Heart right ventricle (tissue), 16 donors: ENCODE measurements at regions of chr12 and their contacts with region 1.

Region 1: GRCh38 chr12:56117778-56118687 is at the start of gene ZC3H10:
- DNase-seq: peak; percentile 93 to 97
- ATAC-seq: peak; percentile 81 to 91 (median 88)
- H3K4me3 ChIP-seq: peak within 1 kb of the TSS; percentile 53 to 84 (median 74)
- H3K27ac ChIP-seq: peak within 1 kb of the TSS; percentile 82 to 95 (median 91)
- H3K4me1 ChIP-seq: peaks cover 0 to 56% (median 38%) of the 10 kb centered on the region in 9 donors
- H3K27me3 ChIP-seq: no peaks in the 10 kb centered on the region
- CTCF ChIP-seq: peak in 8 of 9 donors; percentile 43 to 78 (median 52)
- total RNA-seq, gene ZC3H10: 3.6 to 5.8 (median 4.9) TPM

Region 2: GRCh38 chr12:55780685-55781084 is 337.3 kb before region 1 on chr12:
- intact Hi-C with region 1: no loop called
- DNase-seq: no peak
- ATAC-seq: no peak
- H3K4me3 ChIP-seq: no peak overlapping the region
- H3K27ac ChIP-seq: no peak overlapping the region
- H3K4me1 ChIP-seq: no peaks in the 10 kb centered on the region
- H3K27me3 ChIP-seq: no peaks in the 10 kb centered on the region
- CTCF ChIP-seq: no peak

Region 3: GRCh38 chr12:55996715-55997534 is 121.1 kb before region 1 on chr12 and contains the start of gene SUOX:
- intact Hi-C with region 1: loop called in 1 of 10 experiments (anchors 5 kb)
- DNase-seq: peak; percentile 94 to 97
- ATAC-seq: peak; percentile 98 to 100 (median 99)
- H3K4me3 ChIP-seq: peak within 1 kb of the TSS; percentile 19 to 79 (median 66)
- H3K27ac ChIP-seq: peak within 1 kb of the TSS in 9 of 10 donors; percentile 62 to 93 (median 83)
- H3K4me1 ChIP-seq: peaks cover 5 to 22% (median 11%) of the 10 kb centered on the region in 9 donors
- H3K27me3 ChIP-seq: no peaks in the 10 kb centered on the region
- CTCF ChIP-seq: no peak
- total RNA-seq, gene SUOX: 28.2 to 44.8 (median 31.4) TPM

Region 4: DNA sequence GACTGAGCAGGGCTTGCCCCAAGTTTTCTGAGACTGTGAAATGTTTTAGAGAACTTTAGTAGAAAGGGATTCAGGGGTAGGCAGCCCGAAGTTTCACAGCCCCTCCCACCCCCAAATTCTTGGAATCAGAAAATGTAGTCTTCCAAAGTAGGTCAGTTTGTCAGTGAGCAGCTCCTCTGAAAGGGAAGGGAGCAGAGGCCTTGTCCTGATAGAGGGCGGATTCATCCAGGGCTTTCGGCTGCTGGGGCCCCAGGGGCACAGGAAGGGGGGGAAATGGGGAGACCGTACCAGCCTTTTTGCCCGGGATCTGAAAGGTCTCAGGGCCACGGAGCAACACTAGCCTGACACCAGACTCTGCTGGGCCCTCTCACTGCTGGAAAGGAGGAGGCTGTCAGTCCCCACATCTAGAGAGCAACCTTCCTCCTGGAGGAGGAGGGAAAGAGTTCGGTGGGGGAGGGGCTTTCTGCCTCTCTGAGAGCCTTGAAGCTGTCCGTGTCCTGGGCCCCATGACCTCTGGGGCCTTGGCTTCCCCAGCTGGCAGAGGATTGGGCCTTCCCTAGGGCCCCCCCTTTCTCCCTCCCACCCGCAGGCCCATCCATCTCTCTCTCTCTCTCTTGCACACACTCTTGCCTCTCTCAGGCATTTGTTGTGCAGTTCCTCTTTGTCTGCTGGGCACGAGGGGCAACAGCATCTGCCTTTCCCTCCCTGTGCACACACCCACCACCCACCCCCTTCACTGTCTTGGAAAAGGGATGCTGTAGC is 97.4 kb before region 1 on chr12 and contains the start of gene IKZF4:
- intact Hi-C with region 1: no loop called
- DNase-seq: peak; percentile 21 to 22
- ATAC-seq: peak; percentile 35 to 65 (median 60)
- H3K4me3 ChIP-seq: peak within 1 kb of the TSS in 7 of 10 donors; percentile 18 to 40 (median 30)
- H3K27ac ChIP-seq: peak within 1 kb of the TSS in 9 of 10 donors; percentile 5 to 70 (median 52)
- H3K4me1 ChIP-seq: peaks cover 0 to 17% (median 9%) of the 10 kb centered on the region in 9 donors
- H3K27me3 ChIP-seq: no peaks in the 10 kb centered on the region
- CTCF ChIP-seq: no peak
- total RNA-seq, gene IKZF4: 5.2 to 10.1 (median 7.3) TPM

Region 5: DNA sequence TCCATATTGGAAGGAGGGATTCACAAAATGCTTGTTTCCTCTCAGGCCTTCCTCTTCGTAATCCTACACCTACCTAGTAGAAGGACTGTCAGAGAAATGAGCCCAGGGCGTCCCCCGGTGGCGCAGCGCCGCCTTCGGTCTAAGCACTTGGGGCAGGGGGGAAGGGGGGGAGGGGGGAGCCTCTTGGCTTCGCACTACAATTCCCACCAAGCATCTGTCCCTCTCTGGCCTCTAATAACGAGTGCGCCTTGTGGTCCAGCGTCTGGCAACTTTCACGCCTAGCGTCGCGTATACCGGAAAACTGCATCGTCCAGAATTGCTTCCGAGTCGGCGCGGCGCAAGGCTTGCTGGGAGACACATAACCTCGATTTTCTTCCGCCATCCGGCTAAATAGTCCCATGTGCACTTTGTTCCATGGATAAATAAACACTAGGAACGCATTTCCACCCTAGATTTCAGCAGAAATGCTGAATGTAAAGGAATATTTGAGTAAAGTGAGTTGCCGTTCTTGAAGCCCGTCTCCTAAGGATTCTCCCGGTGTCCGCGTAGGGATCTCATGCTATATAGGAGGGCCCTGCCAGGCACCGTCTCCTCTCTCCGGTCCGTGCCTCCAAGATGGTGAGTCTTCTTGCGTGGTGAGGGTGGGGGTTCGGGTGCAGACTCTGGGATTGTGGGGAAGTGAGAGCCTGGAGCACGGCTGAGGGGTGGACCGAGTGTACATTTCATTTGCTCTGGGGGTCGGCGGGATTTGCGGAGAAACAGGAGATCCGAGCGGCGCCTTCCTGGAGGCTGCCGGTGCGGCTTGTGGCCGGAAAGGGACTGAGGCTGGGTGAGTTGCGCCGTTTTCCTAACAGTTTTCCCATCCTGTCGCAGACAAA is 76.2 kb before region 1 on chr12 and contains the start of gene RPS26:
- intact Hi-C with region 1: loop called in 1 of 10 experiments (anchors 5 kb)
- DNase-seq: peak; percentile 94 to 98
- ATAC-seq: peak; percentile 95 to 99 (median 97)
- H3K4me3 ChIP-seq: peak within 1 kb of the TSS; percentile 57 to 96 (median 80)
- H3K27ac ChIP-seq: peak within 1 kb of the TSS; percentile 92 to 99 (median 97)
- H3K4me1 ChIP-seq: peaks cover 0 to 23% (median 18%) of the 10 kb centered on the region in 9 donors
- H3K27me3 ChIP-seq: no peaks in the 10 kb centered on the region
- CTCF ChIP-seq: peak in 8 of 9 donors; percentile 34 to 69 (median 54)
- total RNA-seq, gene RPS26: 6.9 to 39.6 (median 19.3) TPM

Region 6: DNA sequence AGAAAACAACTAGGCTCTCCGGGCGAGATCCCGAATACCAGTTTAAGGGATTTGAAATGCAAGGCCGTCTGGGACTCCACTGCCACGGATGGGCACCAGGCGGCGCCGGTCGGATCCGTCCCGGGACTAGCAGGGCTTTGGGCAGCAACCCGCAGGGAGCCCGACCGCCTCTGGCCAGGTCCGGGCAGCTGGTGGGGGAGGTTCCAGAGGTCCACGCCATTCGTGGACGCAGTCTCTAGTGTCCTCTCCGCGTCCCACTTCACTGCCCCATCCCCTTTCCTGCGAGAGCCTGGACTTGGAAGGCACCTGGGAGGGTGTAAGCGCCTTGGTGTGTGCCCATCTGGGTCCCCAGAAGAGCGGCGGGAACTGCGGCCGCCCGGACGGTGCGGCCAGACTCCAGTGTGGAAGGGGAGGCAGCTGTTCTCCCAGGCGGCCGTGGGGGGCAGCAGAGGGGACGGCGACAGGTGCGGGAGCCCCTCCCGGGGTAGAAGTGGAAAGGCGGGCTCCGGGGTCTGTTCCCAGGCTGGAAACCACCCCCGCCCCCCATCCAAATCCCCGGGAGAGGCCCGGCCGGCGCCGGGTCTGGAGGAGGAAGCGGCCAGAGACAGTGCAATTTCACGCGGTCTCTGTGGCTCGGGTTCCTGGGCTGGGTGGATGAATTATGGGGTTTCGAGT is 38.9 kb before region 1 on chr12:
- intact Hi-C with region 1: loop called in 1 of 10 experiments (anchors 5 kb)
- DNase-seq: peak; percentile 81 to 86
- ATAC-seq: peak; percentile 83 to 94 (median 89)
- H3K4me3 ChIP-seq: peak overlapping the region; percentile 19 to 70 (median 56)
- H3K27ac ChIP-seq: peak overlapping the region in 9 of 10 donors; percentile 3 to 55 (median 41)
- H3K4me1 ChIP-seq: peaks cover 0 to 23% (median 18%) of the 10 kb centered on the region in 9 donors
- H3K27me3 ChIP-seq: peaks cover 0 to 32% (median 9%) of the 10 kb centered on the region in 7 donors
- CTCF ChIP-seq: peak; percentile 52 to 79 (median 68)

Region 7: GRCh38 chr12:56103066-56103711 is 14.8 kb before region 1 on chr12:
- intact Hi-C with region 1: no loop called
- DNase-seq: no peak
- ATAC-seq: no peak
- H3K4me3 ChIP-seq: peak overlapping the region in 9 of 10 donors; percentile 63 to 97 (median 87)
- H3K27ac ChIP-seq: peak overlapping the region in 7 of 10 donors; percentile 83 to 93 (median 87)
- H3K4me1 ChIP-seq: peaks cover 9 to 30% (median 25%) of the 10 kb centered on the region in 9 donors
- H3K27me3 ChIP-seq: no peaks in the 10 kb centered on the region
- CTCF ChIP-seq: no peak

Region 8: DNA sequence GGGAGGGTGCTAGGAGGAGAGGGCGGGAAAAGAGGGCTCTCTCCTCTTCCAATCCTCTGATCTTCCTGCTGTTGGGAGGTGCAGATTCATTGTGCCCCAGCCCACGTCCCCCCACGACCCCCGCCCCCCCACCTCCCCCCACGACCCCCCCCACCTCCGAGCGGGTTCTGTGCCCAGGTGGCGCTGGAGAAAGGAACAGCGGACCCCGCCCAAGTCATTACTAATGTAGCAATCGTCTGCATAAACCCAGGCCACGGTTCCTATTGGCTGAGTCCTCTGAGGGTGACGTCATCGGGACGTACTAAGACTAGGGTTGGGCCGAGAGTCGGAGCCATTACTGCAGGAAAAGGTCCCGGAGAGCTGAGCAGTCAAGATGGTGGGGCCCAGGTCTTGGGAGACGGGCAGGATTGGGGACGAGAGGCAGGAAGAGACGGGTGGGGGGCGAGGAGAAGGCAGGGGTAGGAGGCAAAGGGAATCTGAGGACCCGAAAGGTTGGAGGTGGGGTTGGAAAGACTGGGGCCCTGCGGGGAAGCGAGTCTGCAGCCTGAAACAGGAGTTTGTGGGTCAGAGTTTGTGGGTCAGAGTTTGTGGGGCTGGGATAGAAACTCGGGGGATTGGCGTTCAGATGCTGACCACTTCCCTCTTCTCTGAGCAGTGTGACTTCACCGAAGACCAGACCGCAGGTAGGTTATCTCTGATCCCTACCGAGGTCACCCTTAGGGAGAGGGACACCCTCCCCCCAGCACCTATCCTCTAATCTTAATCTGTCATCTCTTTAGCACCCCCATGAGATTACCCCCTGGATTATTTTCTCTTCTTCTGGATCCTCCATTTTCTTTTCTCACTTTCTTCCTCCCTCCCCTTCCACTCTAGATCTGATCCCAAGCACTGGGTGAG is 40.2 kb after region 1 on chr12 and contains the start of gene MYL6:
- intact Hi-C with region 1: loop called in 4 of 10 experiments (anchors 2 to 5 kb)
- DNase-seq: peak; percentile 86 to 99
- ATAC-seq: peak; percentile 85 to 96 (median 93)
- H3K4me3 ChIP-seq: peak within 1 kb of the TSS; percentile 73 to 98 (median 91)
- H3K27ac ChIP-seq: peak within 1 kb of the TSS; percentile 93 to 99 (median 98)
- H3K4me1 ChIP-seq: peaks cover 20 to 53% (median 42%) of the 10 kb centered on the region in 9 donors
- H3K27me3 ChIP-seq: no peaks in the 10 kb centered on the region
- CTCF ChIP-seq: no peak
- total RNA-seq, gene MYL6: 355 to 1,188 (median 413) TPM

Region 9: DNA sequence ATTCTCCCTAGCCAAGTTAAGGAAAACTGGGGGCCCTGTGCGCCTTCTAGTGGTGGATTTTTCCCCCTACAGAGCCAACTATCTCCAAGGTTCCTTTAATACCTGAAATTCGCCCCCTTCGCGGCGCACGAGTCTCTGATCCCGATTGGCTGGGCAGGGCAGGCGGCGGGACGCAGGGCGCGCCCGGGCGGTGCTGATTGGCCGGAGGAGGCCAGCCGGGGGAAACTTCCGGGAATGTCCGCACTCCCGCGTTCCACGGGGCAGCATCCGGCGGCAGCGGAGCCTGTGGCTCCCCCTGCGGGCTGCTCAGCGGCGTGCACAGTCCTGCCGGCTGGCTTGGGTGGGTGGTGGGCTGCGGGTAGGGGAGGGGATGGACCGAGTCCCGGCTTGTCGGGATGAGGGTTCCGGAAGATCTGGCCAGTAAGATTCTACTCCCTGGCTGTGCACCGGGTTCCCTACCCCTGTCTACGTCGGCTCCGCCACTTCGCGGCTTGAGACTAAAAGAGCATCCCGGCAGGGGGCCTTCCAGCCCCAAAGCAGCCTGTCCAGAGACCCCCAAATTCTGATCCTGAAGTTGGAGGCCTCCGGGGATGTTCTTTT is 106.2 kb after region 1 on chr12 and contains the start of gene NABP2:
- intact Hi-C with region 1: loop called in 5 of 10 experiments (anchors 2 to 5 kb)
- DNase-seq: peak; percentile 98
- ATAC-seq: peak; percentile 83 to 92 (median 89)
- H3K4me3 ChIP-seq: peak within 1 kb of the TSS; percentile 50 to 78 (median 70)
- H3K27ac ChIP-seq: peak within 1 kb of the TSS; percentile 51 to 99 (median 88)
- H3K4me1 ChIP-seq: peaks cover 4 to 49% (median 39%) of the 10 kb centered on the region in 9 donors
- H3K27me3 ChIP-seq: no peaks in the 10 kb centered on the region
- CTCF ChIP-seq: peak; percentile 76 to 98 (median 89)
- total RNA-seq, gene NABP2: 16.2 to 25.3 (median 20.4) TPM